Right ventricle myocardium superior (tissue), 1 donor: ENCODE measurements at regions of chr3 and their contacts with region 1.

Region 1: GRCh38 chr3:132645058-132645457 is 14.6 kb downstream of the ACAD11 start:
- DNase-seq: no peak
- ATAC-seq: no peak

Region 2: DNA sequence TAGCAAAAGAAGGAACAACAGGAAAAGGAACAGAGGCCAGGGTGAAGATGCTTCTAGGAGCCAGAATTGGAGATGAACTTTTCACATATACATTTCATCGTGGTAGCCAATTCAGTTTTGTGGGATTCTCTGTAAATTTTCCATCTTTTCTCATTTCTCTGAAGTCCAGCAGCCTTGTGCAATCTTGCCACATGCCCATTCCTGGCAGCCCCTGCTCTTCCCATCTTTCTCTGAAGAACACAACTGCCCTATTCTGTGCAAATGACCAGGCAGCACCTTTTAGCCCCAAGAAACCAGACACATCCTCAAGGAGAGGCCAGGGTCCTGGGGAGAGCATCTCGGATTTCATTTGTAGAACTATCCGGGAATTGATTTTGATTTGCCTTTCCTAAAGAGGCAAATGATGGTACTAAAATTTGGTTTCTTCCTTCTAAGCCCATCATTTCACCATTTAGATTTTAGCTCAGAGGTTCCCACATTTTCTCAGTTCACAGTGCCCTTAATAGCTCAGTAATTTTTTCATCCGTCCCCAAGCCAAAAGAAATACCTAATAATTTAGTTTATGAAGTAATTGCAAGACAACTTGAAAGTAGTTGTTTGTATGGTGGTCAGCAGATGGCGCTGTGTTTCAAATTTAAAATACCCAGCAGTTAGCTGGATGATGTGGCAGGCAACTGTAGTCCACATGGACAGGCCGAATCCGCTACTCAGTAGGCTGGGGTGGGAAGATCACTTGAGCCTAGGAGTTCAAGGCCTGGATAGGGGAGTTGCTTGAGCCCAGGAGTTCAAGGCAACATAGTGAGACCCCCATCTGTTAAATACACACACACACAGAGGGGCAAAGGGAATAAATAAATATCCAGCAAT is 109.2 kb before region 1 on chr3:
- intact Hi-C with region 1: loop called (anchors 2 kb)
- DNase-seq: peak; percentile 44
- ATAC-seq: peak; percentile 89